ENCODE measurements at regions of chr15 and their contacts with region 1.

Region 1: GRCh38 chr15:27679731-27680471 is 419.2 kb downstream of the OCA2 start:
- DNase-seq: no peak
- ATAC-seq: no peak
- H3K4me3 ChIP-seq: no peak overlapping the region
- H3K27ac ChIP-seq: no peak overlapping the region
- H3K4me1 ChIP-seq: no peaks in the 10 kb centered on the region
- H3K27me3 ChIP-seq: no peaks in the 10 kb centered on the region
- CTCF ChIP-seq: no peak

Region 2: DNA sequence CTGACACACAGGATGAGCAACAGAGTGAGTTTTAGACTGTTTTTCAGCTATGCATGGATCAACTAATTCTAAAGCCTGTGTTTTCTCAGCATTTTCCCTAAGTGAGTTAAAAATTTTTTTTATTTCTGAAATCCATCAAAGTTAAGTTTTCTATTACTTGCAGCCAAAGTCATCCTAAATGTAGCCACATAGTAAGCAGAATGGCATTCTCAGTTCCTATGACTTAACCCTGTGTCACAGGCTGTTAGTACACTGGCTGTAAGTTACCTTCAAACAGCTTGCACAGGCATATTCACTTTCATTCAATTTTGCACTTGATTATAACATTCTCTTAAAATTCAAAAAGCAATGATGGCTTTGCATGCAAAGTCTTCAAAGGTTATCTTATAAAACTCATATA is 51.0 kb after region 1 on chr15:
- intact Hi-C with region 1: loop called in 1 of 3 experiments (anchors 10 kb)
- DNase-seq: no peak
- ATAC-seq: no peak
- H3K4me3 ChIP-seq: no peak overlapping the region
- H3K27ac ChIP-seq: no peak overlapping the region
- H3K4me1 ChIP-seq: no peaks in the 10 kb centered on the region
- H3K27me3 ChIP-seq: no peaks in the 10 kb centered on the region
- CTCF ChIP-seq: no peak

Measured in pancreas (tissue), 10 donors.